ENCODE measurements at regions of chr4 and their contacts with region 1.

Region 1: GRCh38 chr4:163755013-163755412 is 260.5 kb downstream of the TMA16 start:
- DNase-seq: peak in 4 of 5 donors; percentile 32 to 43 (median 38)
- H3K4me3 ChIP-seq: no peak overlapping the region
- H3K4me3 Mint-ChIP-seq: peak overlapping the region in 2 of 8 donors; percentile 29 to 39
- H3K27ac ChIP-seq: no peak overlapping the region
- H3K27ac Mint-ChIP-seq: no peak overlapping the region
- H3K4me1 ChIP-seq: no peaks in the 10 kb centered on the region
- H3K4me1 Mint-ChIP-seq: peaks cover 0 to 8% (median 3%) of the 10 kb centered on the region in 4 donors
- H3K27me3 ChIP-seq: no peaks in the 10 kb centered on the region
- H3K27me3 Mint-ChIP-seq: peaks cover 0 to 2% of the 10 kb centered on the region in 2 donors

Region 2: DNA sequence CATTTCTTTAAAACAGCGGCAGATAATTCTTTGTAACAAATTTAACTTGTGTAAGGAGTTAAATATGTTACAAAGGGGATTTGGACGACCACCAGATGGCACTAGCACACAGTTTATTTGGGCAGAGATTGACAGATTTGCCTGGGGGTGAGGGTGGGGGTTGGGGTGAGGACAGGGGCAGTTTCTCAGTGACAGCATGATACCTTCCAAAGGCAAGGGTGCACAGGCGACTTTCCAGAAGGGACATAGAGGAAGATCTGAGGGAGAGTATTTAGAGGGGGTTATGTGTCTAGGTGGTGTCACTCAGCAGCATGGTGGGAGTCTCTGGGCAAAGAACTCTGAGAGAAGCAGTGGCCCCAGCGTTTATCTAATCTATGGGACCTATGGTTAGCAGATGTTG is 270.1 kb before region 1 on chr4:
- CTCF ChIA-PET with region 1: no interaction called
- POLR2A ChIA-PET with region 1: no interaction called
- intact Hi-C with region 1: loop called (anchors 5 kb)
- DNase-seq: peak in 4 of 5 donors; percentile 29 to 36 (median 34)
- H3K4me3 ChIP-seq: no peak overlapping the region
- H3K4me3 Mint-ChIP-seq: no peak overlapping the region
- H3K27ac ChIP-seq: no peak overlapping the region
- H3K27ac Mint-ChIP-seq: no peak overlapping the region
- H3K4me1 ChIP-seq: no peaks in the 10 kb centered on the region
- H3K4me1 Mint-ChIP-seq: peaks cover 0 to 3% (median 0%) of the 10 kb centered on the region in 4 donors
- H3K27me3 ChIP-seq: no peaks in the 10 kb centered on the region
- H3K27me3 Mint-ChIP-seq: peaks cover 0 to 1% of the 10 kb centered on the region in 2 donors

Region 3: DNA sequence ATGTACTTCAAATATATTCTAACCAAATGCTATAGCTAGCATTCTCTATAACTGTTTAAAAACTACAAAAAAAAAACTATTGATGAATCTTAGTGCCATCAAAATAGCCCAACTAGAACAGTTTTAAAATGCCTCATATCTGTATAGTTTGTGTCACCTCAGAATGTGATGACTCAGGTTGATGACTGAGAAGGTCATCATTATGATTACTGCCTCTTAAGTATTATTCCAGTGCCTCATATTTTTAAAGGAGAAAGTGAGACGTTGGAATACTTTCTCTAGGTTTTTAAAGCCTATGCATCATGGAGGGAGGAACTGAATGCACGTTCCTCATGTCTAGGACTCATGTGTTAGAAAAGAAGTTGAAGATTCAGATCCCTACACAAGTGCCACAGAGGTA is 172.3 kb before region 1 on chr4:
- CTCF ChIA-PET with region 1: no interaction called
- POLR2A ChIA-PET with region 1: no interaction called
- intact Hi-C with region 1: no loop called
- DNase-seq: no peak
- H3K4me3 ChIP-seq: no peak overlapping the region
- H3K4me3 Mint-ChIP-seq: no peak overlapping the region
- H3K27ac ChIP-seq: no peak overlapping the region
- H3K27ac Mint-ChIP-seq: no peak overlapping the region
- H3K4me1 ChIP-seq: no peaks in the 10 kb centered on the region
- H3K4me1 Mint-ChIP-seq: no peaks in the 10 kb centered on the region
- H3K27me3 ChIP-seq: no peaks in the 10 kb centered on the region
- H3K27me3 Mint-ChIP-seq: peaks cover 1 to 5% of the 10 kb centered on the region in 2 donors